A549 (cell line): ENCODE measurements at regions of chr15 and their contacts with region 1.

Region 1: DNA sequence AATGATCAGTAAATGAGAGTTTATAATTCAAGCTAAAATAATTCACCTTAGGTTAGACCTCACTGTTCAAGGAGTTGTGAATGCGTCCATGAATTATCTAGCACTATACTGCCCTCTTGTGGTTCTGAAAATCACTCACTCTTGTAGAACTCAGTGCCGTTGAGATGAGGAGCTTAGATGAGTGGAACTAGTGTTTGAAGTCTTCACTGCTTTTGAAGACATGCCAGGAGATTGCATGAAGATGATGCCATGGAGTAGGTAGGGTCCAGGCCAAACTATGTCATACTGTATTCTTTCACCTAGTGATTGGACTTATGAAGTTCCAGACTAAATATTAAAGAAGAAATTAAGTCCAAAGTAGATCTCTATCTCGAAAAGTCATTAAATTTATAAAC is 28.8 kb downstream of the LYSMD4 start:
- DNase-seq: peak; percentile 78 to 90
- ATAC-seq: peak; percentile 78 to 95
- H3K4me3 ChIP-seq: no peak overlapping the region
- H3K27ac ChIP-seq: peak overlapping the region in 1 of 2 experiments; percentile 71; a peak in 2 of 6 replicates
- H3K4me1 ChIP-seq: peaks cover 35% of the 10 kb centered on the region
- CTCF ChIP-seq: peak; percentile 84
- EP300 ChIP-seq: no peak
- POLR2A ChIP-seq: no peak
- RAD21 ChIP-seq: peak; percentile 93 to 95

Region 2: GRCh38 chr15:99104788-99105513 is 599.5 kb before region 1 on chr15 and contains the start of gene SYNM:
- CTCF ChIA-PET with region 1: interaction called, 10 read pairs
- POLR2A ChIA-PET with region 1: no interaction called
- DNase-seq: peak; percentile 93 to 94
- ATAC-seq: peak; percentile 83 to 91
- H3K4me3 ChIP-seq: peak within 1 kb of the TSS; percentile 64
- H3K27ac ChIP-seq: peak within 1 kb of the TSS; percentile 77 to 92
- H3K4me1 ChIP-seq: peaks cover 20% of the 10 kb centered on the region
- CTCF ChIP-seq: peak; percentile 99
- EP300 ChIP-seq: no peak
- POLR2A ChIP-seq: peak; percentile 100
- RAD21 ChIP-seq: peak; percentile 76 to 97
- polyA plus RNA-seq, gene SYNM: 22.6 and 23.7 TPM in 2 replicates

Region 3: GRCh38 chr15:99305761-99306505 is 398.5 kb before region 1 on chr15:
- CTCF ChIA-PET with region 1: interaction called, 23 read pairs
- POLR2A ChIA-PET with region 1: no interaction called
- DNase-seq: peak in 1 of 2 experiments; percentile 72
- ATAC-seq: peak; percentile 74 to 78; a peak in 4 of 6 replicates
- H3K4me3 ChIP-seq: peak overlapping the region; percentile 4; the same call in 1 of the 3 replicates
- H3K27ac ChIP-seq: peak overlapping the region; percentile 24 to 45; a peak in 4 of 6 replicates
- H3K4me1 ChIP-seq: peaks cover 31% of the 10 kb centered on the region
- CTCF ChIP-seq: no peak
- EP300 ChIP-seq: no peak
- POLR2A ChIP-seq: no peak
- RAD21 ChIP-seq: no peak; a peak in 1 of 5 replicates

Region 4: DNA sequence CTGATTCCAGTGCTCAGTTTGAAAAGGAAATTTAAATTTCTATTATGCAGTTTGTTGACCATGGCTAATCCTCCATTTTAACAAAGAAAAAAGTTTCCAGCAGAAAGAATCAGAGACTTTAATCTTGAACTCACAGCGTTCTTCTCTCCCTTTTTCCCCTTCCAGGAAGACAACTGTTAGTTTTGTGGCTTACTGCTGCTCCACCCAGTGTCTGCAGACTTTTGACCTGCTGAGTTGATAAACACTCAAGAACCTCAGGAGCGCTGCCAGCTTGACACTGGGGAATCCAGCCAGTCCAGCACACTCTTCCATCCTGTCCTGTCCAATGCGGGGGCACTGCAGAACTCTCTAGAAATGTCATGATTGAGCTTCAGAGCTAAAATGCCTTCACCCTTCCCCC is 318.6 kb before region 1 on chr15:
- CTCF ChIA-PET with region 1: interaction called, 12 read pairs
- POLR2A ChIA-PET with region 1: no interaction called
- DNase-seq: peak in 1 of 2 experiments; percentile 58
- ATAC-seq: peak; percentile 68 to 87; a peak in 4 of 6 replicates
- H3K4me3 ChIP-seq: no peak overlapping the region
- H3K27ac ChIP-seq: peak overlapping the region; percentile 1 to 67; a peak in 4 of 6 replicates
- H3K4me1 ChIP-seq: peaks cover 22% of the 10 kb centered on the region
- CTCF ChIP-seq: no peak
- EP300 ChIP-seq: no peak
- POLR2A ChIP-seq: no peak
- RAD21 ChIP-seq: peak; percentile 12 to 37; a peak in 2 of 5 replicates

Region 5: DNA sequence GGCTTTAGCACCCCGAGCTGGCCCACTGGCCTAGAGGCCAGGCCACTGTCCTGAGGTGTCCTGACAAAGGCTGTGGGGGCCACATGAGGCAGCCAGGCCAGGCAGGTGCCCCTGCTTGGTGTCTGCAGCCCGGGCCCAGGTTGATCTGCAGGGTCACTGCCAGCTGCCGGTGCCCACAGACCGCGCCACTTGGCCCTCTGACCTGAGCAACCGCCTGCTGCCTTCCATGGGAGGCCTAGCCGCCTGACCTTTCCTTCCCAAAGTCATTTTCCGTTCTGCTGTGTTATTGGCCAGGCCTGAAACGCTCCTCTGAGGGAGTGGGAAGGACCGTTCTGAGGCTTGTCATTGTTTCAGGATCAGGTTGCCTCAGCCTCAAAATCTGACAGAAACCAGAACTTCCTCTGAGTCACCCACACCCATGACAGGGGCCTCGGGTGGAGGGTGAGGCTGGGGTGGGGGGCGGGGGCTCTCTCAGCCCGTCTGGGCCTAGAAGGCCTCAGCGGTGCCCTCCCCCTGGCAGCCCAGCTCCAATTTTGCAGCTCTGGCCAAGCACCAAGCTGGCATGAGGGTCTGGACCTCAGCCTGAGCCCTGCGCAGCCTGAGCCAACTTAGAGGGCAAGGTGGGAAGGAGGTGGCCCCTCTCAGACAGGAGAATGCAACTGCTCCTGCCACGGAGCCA is 279.3 kb before region 1 on chr15:
- CTCF ChIA-PET with region 1: interaction called, 17 read pairs
- POLR2A ChIA-PET with region 1: no interaction called
- DNase-seq: no peak
- ATAC-seq: no peak; a peak in 2 of 6 replicates
- H3K4me3 ChIP-seq: no peak overlapping the region
- H3K27ac ChIP-seq: peak overlapping the region in 1 of 2 experiments; percentile 47; a peak in 2 of 6 replicates
- H3K4me1 ChIP-seq: 0 out of 3 replicates have a peak, but pooled peaks cover 7% of the 10 kb centered on the region
- CTCF ChIP-seq: no peak
- EP300 ChIP-seq: no peak
- POLR2A ChIP-seq: no peak
- RAD21 ChIP-seq: no peak

Region 6: GRCh38 chr15:99671926-99672635 is 32.4 kb before region 1 on chr15:
- CTCF ChIA-PET with region 1: interaction called, 14 read pairs
- POLR2A ChIA-PET with region 1: no interaction called
- DNase-seq: no peak
- ATAC-seq: no peak
- H3K4me3 ChIP-seq: no peak overlapping the region
- H3K27ac ChIP-seq: no peak overlapping the region
- H3K4me1 ChIP-seq: no peaks in the 10 kb centered on the region
- CTCF ChIP-seq: no peak
- EP300 ChIP-seq: no peak
- POLR2A ChIP-seq: no peak
- RAD21 ChIP-seq: no peak

Region 7: GRCh38 chr15:99733268-99734039 is 29.0 kb after region 1 on chr15 and contains the start of gene LYSMD4:
- CTCF ChIA-PET with region 1: interaction called, 30 read pairs
- POLR2A ChIA-PET with region 1: interaction called, 17 read pairs
- DNase-seq: peak; percentile 94 to 96
- ATAC-seq: peak; percentile 96 to 99
- H3K4me3 ChIP-seq: peak within 1 kb of the TSS; percentile 61
- H3K27ac ChIP-seq: peak within 1 kb of the TSS; percentile 85 to 90
- H3K4me1 ChIP-seq: peaks cover 10% of the 10 kb centered on the region; the same call in 1 of the 3 replicates
- CTCF ChIP-seq: no peak
- EP300 ChIP-seq: no peak
- POLR2A ChIP-seq: peak; percentile 69
- RAD21 ChIP-seq: no peak
- polyA plus RNA-seq, gene LYSMD4: 3.8 TPM in 2 replicates

Region 8: GRCh38 chr15:99954361-99955180 is 250.1 kb after region 1 on chr15:
- CTCF ChIA-PET with region 1: no interaction called
- POLR2A ChIA-PET with region 1: no interaction called
- DNase-seq: no peak
- ATAC-seq: no peak
- H3K4me3 ChIP-seq: no peak overlapping the region
- H3K27ac ChIP-seq: no peak overlapping the region
- H3K4me1 ChIP-seq: no peaks in the 10 kb centered on the region
- CTCF ChIP-seq: no peak
- EP300 ChIP-seq: no peak
- POLR2A ChIP-seq: no peak
- RAD21 ChIP-seq: no peak